Heart left ventricle (tissue), 16 donors: ENCODE measurements at regions of chr12 and their contacts with region 1.

Region 1: DNA sequence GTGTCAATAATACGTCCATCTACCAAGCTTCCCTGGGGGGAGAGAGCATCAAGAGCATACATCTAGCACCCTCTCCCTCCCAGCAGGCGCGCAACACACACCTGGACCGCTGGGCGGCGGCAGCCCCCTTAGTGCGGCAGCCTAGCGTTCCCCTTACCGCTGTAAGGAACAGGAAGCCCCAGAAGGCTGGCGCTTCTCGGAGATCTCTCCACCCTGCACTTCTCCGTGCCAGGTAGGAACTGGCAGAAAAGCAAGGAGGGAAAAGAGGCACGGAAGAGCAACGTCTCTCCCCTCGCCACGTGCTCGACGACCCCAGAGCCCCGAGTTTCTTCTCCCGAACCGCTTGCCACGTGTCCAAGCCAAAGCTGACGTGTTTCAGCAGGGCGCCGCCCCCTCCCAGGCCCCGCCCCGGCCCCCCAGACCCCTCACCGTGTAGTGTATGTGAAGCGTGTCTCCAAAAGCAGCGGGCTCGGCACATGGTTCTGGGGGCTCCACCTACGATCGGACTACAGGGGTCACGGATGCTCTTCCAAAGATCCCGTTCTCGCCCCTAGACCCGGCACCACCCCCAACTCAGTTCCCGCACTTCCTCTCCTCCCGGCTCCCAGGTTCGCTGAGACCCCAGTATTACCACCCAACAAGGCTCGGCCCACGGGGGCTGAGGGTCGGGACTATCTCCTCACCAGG is 532 bp downstream of the FKBP11 start:
- DNase-seq: peak; percentile 27 to 78 (median 34)
- ATAC-seq: peak; percentile 45 to 79 (median 72)
- H3K4me3 ChIP-seq: peak overlapping the region; percentile 42 to 96 (median 83)
- H3K27ac ChIP-seq: peak overlapping the region in 5 of 12 donors; percentile 24 to 77 (median 58)
- H3K4me1 ChIP-seq: peaks cover 0 to 17% (median 6%) of the 10 kb centered on the region in 12 donors
- H3K27me3 ChIP-seq: no peaks in the 10 kb centered on the region
- CTCF ChIP-seq: peak in 11 of 12 donors; percentile 12 to 58 (median 42)
- POLR2A ChIP-seq: no peak

Region 2: DNA sequence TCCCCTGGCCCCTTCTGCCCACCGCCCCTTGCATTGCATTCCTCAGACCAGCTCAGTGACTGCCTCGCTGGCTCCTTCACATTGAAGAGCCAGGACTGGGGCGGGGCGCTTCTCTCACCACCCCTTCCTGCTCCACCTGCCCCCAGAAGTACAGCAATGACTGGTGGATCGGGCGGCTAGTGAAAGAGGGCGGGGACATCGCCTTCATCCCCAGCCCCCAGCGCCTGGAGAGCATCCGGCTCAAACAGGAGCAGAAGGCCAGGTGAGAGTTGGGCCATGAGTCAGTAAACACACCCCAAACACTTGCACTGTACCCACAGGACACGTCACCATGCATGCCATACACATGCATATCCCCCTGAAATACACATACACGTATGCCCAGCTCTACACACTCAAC is 100.6 kb before region 1 on chr12:
- intact Hi-C with region 1: no loop called
- DNase-seq: no peak
- ATAC-seq: no peak
- H3K4me3 ChIP-seq: no peak overlapping the region
- H3K27ac ChIP-seq: no peak overlapping the region
- H3K4me1 ChIP-seq: peaks cover 0 to 4% (median 0%) of the 10 kb centered on the region in 12 donors
- H3K27me3 ChIP-seq: no peaks in the 10 kb centered on the region
- CTCF ChIP-seq: no peak
- POLR2A ChIP-seq: no peak

Region 3: DNA sequence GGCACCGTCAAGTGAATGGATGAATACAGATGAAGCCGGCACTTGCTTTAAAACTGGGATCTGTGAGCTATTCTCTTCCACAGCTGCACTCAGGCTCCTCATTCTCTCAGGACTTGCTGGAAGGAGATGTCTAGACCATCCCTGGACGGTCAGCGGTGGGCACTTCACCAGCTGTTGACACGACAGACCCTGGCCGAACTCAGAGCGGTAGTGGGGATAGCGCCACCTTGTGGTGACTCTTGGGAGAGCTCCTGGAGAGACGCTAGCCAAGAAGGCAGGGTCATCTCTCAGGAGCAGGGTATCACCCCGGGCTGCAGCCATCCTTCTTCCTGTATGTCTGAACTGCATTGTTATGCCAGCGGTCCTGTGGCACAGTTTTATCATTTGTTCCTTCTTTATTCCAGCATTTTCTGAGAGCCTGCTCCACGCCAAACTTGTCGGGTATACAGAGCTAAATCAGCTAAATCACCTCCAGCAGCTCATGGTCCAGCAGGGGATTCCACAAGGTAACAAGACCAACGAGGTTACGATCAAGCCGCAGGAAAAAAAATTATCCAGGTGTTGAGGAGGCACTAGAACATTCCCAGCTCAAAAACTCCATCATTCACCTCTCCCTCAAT is 63.4 kb after region 1 on chr12:
- intact Hi-C with region 1: loop called in 1 of 10 experiments (anchors 5 kb)
- DNase-seq: peak in 4 of 5 donors; percentile 63 to 79 (median 66)
- ATAC-seq: peak; percentile 35 to 57 (median 49)
- H3K4me3 ChIP-seq: no peak overlapping the region
- H3K27ac ChIP-seq: no peak overlapping the region
- H3K4me1 ChIP-seq: peaks cover 0 to 17% (median 4%) of the 10 kb centered on the region in 12 donors
- H3K27me3 ChIP-seq: peaks cover 0 to 71% (median 8%) of the 10 kb centered on the region in 9 donors
- CTCF ChIP-seq: peak; percentile 67 to 92 (median 80)
- POLR2A ChIP-seq: no peak